Activated CD4-positive, alpha-beta T cell treated with anti-CD3 and anti-CD28 coated beads for 36 hours (primary cell): ENCODE measurements at regions of chr19 and their contacts with region 1.

Region 1: DNA sequence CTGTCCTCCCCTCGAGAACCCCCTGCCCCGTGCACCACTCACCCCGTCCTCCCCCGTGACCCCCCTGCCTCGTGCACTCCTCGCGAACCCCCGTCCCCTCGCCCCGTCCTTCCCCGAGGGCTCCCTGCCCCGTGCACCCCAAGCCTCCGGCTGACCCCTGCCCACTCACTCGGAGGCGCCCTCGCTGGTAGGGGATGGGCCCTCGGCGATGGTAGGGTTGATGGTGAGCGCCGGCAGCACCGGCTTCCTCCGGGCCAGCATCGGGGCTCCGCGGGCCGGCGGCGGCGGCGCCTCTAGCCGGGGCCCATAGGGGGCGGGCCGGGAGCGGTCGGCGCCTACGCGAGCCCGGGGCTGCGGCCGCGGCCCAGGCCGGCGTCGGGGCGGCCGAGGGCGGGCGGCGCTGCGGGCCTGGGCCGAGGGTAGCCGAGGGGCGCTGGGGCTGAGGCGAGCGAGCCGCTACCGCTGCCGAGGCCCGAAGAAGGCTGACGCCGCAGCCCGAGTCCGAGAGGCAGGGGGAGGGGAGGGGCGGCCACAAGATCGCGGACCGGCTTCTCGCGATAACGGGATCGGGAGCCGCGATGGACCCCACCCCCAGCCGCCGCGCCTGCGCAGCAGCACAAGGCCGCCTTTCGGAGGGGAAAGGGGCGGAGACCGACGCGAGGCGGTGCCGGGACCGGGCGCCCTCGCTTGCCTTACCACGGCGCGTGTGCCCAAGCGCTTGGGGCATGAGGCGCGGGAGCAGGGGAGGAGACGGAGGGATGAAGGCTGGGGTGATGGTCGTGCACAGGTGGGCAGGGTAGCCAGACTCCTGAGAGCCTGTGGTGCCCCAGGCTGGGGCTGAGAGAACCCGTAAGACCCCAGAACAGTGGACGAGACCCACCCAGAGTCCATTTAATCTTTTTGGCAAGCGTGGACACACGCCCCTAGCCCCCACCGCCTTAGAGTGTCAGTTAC is at the start of gene MAP2K2:
- DNase-seq: peak; percentile 98
- ATAC-seq: peak; percentile 96
- H3K4me3 Mint-ChIP-seq: peak within 1 kb of the TSS; percentile 97
- H3K27ac Mint-ChIP-seq: peak within 1 kb of the TSS; percentile 92
- H3K4me1 Mint-ChIP-seq: peaks cover 18% of the 10 kb centered on the region
- H3K27me3 Mint-ChIP-seq: no peaks in the 10 kb centered on the region
- total RNA-seq, gene MAP2K2: 108 to 133 TPM

Region 2: DNA sequence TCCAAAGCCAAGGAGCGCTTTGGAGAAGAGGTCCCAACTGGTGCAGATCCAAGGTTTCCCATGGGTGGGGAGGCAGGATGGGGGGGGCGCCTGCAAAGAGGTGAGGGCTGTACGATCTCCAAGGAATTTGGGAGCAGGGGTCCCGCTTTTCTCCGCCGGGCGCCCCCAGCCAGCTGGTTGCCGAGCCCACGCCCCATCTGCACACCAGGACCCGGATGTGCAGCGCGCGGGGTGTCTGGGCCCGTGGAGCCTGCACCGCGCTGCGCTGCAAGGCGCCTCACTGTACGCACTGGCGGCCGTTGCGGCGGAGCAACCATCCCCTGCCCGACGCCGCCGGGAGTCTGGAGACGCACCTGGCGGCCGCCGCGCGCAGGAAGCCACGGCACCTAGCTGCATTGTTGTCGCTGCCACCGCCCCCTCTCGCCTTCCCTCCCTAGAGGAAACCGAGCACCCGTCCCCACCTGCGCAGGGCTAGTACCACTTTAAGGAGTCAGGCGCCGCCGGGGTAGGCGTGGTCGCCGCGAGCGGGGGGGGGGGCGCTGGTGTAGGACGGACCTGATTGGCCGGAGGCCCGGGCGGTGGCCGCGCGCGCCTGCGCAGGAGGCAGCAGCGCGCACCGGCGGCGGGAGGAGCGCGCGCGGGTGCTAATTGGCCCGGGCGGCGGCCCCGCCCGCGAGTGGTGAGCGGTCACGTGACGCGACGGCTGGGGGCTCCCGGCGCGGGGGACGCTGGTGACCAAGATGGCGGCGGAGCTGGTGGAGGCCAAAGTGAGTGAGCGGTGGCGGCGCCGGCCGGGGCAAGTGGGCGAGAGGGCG is 116.7 kb before region 1 on chr19 and contains the start of gene PIAS4:
- CTCF ChIA-PET with region 1: no interaction called
- POLR2A ChIA-PET with region 1: no interaction called
- intact Hi-C with region 1: loop called in 1 of 2 experiments (anchors 1 kb)
- DNase-seq: peak; percentile 97
- ATAC-seq: peak; percentile 92
- H3K4me3 Mint-ChIP-seq: peak within 1 kb of the TSS; percentile 75
- H3K27ac Mint-ChIP-seq: peak within 1 kb of the TSS; percentile 71
- H3K4me1 Mint-ChIP-seq: peaks cover 27% of the 10 kb centered on the region
- H3K27me3 Mint-ChIP-seq: no peaks in the 10 kb centered on the region
- total RNA-seq, gene PIAS4: 23.0 to 37.3 TPM